ENCODE measurements at regions of chr3 and their contacts with region 1.

Region 1: DNA sequence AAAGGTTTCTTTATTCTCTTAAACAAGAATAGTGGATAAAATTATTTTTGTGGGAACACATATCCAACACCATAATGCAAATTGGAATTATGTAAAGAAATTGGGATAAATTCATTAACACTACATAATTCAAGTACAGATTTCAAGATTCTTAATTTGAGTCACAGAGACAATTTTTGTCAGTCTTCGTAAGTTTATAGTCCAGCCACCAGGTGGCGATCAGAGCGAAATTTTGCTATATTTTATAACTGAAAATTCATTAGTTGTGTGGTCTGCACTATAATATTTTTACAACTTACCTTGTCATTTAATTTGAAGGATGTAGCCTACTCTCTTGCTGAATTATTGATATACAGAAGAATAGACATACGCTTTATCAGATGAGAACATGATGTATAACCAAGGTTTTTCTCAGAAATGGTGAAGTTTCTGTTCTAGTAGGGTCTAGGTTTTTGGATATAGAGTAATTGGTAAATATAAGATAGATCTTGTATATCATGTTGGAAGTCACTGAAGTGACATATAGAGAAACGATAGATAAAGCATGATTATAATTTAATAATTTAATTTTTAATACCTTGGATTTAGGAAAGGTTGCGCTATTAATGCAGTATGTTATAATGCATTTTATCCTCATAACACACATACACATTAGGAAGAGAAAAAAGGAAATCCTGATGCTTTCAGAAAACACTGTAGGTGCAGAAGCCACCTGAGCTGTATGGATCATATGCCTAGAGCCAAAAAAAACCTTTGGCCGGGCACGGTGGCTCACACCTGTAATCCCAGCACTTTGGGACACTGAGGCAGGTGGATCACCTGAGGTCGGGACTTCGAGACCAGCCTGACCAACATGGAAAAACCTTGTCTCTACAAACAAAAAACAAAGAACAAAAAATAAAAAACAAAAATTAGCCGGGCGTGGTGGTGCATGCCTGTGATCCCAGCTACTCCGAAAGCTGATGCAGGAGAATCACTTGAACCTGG is 31.7 kb downstream of the PLSCR4 start:
- DNase-seq: peak; percentile 71
- H3K4me3 Mint-ChIP-seq: no peak overlapping the region
- H3K27ac Mint-ChIP-seq: no peak overlapping the region
- H3K4me1 Mint-ChIP-seq: no peaks in the 10 kb centered on the region
- H3K27me3 Mint-ChIP-seq: peaks cover 3% of the 10 kb centered on the region

Region 2: GRCh38 chr3:146326670-146327543 is 107.7 kb after region 1 on chr3:
- intact Hi-C with region 1: loop called (anchors 1 kb)
- DNase-seq: no peak
- H3K4me3 Mint-ChIP-seq: no peak overlapping the region
- H3K27ac Mint-ChIP-seq: no peak overlapping the region
- H3K4me1 Mint-ChIP-seq: no peaks in the 10 kb centered on the region
- H3K27me3 Mint-ChIP-seq: peaks cover 2% of the 10 kb centered on the region

Region 3: DNA sequence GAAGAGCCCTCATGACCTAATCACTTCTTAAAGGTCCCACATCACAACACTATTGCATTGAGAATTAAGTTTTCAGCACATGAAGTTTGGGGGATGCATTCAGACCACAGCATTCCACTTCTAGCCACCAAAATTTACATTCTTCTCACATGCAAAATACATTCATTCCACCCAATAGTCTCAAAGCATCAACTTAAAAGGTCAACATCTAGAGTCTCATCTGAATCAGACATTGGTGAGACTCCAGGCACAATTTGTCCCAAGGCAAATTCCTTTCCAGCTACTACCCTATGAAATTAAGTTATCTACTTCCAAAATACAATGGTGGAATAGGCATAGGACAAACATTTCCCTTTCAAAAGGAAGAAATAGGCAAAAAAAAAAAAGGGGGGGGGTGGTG is 185.3 kb after region 1 on chr3:
- intact Hi-C with region 1: no loop called
- DNase-seq: no peak
- H3K4me3 Mint-ChIP-seq: no peak overlapping the region
- H3K27ac Mint-ChIP-seq: no peak overlapping the region
- H3K4me1 Mint-ChIP-seq: no peaks in the 10 kb centered on the region
- H3K27me3 Mint-ChIP-seq: peaks cover 3% of the 10 kb centered on the region

Region 4: DNA sequence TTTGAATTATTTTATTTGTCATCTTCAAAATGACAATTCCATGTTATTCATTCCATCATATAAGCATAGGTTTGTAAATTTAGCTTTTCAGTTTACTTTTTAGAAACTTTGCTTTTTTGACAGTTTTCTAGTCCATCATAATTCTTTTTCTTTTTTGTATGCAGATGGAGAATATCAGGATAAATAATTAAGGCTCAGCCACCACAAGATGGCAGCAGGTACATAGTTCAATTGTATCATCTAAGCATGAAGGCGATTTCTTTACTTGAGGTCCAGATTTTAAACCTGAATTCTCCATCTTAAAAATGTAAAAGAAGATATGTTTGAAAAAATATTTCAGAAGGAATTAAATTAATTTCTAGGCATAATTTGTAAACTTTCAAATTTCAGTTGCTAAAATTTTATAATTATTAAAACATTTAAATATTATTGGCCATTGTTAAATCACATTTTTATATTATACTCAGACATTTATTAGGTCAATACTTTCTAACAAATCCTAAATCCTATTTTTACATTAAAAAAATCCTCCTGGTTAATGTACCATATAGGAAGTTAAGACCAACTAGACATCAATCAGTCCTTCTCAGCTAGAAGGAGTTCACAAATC is 370.8 kb after region 1 on chr3:
- intact Hi-C with region 1: loop called (anchors 5 kb)
- DNase-seq: no peak
- H3K4me3 Mint-ChIP-seq: no peak overlapping the region
- H3K27ac Mint-ChIP-seq: no peak overlapping the region
- H3K4me1 Mint-ChIP-seq: no peaks in the 10 kb centered on the region
- H3K27me3 Mint-ChIP-seq: peaks cover 30% of the 10 kb centered on the region